Heart right ventricle (tissue), 16 donors: ENCODE measurements at regions of chr9 and their contacts with region 1.

Region 1: DNA sequence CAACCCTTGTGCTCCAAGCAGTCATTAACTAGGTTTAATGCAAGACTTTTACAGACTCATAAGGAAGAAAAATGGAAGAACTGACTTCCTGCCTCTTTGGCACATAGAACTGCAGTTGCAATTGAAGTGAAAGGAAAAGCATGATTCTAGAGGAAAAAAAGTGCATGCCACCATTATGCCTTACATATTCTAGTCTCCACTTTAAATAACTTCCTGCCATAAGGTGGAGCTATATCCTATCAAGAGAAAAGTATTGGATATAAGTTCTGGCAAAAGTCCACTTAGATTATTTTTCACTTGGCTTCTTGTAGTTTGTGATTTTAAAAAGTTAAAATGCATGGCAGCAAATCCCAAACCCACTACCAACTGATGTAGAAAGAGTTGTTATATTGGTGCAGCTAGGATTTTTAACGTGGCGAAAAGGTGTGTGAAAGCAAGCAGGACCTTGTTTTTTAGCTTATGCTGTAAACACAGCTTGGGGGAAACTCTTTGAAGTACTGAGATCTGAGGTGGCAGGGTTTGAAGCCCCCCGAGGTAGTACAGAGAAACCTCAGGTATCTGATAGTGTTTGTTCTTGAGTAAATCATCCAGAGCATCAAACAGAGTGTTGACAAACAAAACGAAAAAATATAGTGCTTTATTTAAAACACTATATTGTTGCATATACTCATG is 117.9 kb downstream of the ANXA1 start:
- DNase-seq: no peak
- ATAC-seq: peak in 1 of 8 donors; percentile 41
- H3K4me3 ChIP-seq: no peak overlapping the region
- H3K27ac ChIP-seq: no peak overlapping the region
- H3K4me1 ChIP-seq: peaks cover 0 to 9% (median 0%) of the 10 kb centered on the region in 9 donors
- H3K27me3 ChIP-seq: no peaks in the 10 kb centered on the region
- CTCF ChIP-seq: peak in 8 of 9 donors; percentile 18 to 54 (median 36)

Region 2: DNA sequence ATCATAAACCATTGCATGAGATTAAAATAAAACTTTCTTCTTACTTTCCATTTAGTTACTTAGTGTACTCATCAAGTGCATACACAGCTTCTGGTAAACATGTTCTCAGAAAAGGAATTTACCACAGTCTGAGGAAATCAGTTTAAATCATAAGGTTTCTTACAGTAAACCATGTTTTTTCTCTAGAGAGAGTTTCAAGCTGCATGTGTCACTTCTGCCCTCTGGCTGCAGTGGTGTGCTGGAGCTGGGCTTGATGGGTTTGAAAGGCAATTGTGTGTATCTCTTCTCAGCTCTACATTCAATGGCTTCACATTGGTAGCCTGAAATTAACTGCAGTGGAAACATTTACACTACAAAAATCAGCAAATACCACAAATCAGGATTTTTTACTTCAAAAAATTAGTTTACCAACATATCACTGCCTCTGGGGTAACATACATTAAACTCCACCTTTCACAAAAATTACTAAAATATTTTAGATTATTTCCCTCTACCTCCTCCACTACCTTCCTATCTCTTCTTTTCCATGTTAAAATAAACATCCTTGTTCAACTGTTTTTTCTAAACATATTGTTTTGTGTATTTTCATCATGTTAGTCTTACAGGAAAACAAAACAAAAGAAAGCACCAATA is 296.4 kb after region 1 on chr9:
- intact Hi-C with region 1: loop called in 9 of 10 experiments (anchors 2 to 10 kb)
- DNase-seq: peak in 1 of 2 donors; percentile 14
- ATAC-seq: peak in 2 of 8 donors; percentile 33 to 55
- H3K4me3 ChIP-seq: no peak overlapping the region
- H3K27ac ChIP-seq: no peak overlapping the region
- H3K4me1 ChIP-seq: no peaks in the 10 kb centered on the region
- H3K27me3 ChIP-seq: no peaks in the 10 kb centered on the region
- CTCF ChIP-seq: peak; percentile 13 to 68 (median 52)